GM18951 (cell line): ENCODE measurements at regions of chr10 and their contacts with region 1.

Region 1: DNA sequence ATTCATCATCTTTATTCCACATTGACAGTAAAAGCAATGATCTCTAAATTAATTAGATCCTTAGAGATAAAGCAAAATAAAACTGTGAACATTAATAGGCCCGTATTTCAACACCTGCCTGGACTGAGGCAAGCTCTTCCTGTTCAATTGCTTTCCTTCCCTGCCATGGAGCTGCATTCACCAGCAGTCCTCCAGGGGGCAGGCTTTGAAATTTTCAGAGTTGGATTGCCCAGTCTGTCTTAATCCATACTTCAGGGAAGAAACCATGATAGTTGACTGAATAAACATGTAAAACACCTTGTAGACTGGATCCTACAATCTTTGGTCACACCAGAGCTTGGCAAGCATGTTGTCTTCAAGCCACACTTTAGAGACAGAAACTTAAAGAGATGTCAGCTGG is 936.6 kb downstream of the NRG3 start:
- POLR2A ChIP-seq: no peak

Region 2: DNA sequence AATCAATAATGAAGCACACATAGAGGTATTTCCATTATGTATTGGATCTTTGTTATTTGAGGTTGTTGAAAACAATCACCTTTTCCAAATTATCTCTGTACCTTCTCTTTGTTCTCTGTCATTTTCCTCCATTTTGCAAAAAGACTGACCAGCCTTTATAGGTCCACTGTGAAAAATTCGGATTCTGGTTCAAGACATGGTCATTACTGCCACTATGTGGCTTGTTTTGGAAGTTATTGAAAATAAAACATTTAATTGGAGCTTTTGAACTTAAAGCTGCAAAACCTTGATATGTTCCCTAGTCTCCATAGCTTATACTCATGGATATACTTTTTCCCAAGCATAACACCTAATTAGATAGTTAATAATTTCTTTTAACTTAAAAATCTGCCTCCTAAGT is 157.8 kb after region 1 on chr10:
- in situ Hi-C with region 1: no loop called
- POLR2A ChIP-seq: no peak

Region 3: DNA sequence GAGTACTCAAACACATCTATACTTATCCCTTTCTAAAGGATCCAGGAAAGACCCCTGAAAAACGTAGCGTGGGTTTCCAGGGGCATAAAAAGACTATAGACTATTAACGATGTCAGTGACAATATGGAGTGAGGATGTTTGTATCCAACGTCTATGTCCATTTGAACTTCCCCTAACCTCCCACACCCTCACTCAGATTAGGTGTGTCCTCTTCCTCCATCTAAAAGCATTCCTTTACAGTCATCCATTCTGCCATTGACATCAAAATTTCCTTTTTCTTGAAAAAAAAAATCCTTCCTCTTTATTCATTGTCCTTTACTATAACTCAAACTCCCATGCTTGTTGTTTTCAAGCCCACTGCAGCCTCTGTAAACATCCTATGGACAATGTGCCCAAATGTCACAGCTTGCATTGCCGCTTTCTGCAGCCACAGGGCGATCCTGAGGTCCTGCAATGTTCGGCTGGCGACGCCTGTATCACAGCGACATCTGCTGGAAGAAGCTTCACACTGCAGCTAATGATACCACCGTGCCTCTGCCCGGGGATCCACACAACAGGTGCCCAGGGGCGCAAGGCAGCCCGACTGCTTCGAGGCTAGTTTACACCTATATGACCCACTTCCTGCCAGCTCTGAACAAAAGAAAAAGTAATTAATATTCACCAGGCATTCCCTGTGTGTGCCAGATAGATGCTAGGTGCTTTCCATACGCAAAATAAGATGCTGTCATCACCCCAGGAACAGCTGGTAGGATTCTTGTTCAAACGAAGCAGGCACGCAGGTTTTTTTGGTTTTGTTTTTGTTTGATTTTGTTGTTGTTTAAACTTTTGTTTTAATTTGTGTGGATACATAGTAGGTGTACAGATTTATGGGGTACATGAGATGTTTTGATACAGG is 1059.8 kb after region 1 on chr10:
- in situ Hi-C with region 1: loop called (anchors 25 kb)
- POLR2A ChIP-seq: no peak